ENCODE measurements at regions of chr4 and their contacts with region 1.

Region 1: GRCh38 chr4:38856524-38857337 is at the start of gene TLR6:
- DNase-seq: peak; percentile 79
- ATAC-seq: peak; percentile 38
- H3K4me3 Mint-ChIP-seq: peak within 1 kb of the TSS; percentile 74
- H3K27ac Mint-ChIP-seq: peak within 1 kb of the TSS; percentile 90
- H3K4me1 Mint-ChIP-seq: peaks cover 32% of the 10 kb centered on the region
- H3K27me3 Mint-ChIP-seq: no peaks in the 10 kb centered on the region
- total RNA-seq, gene TLR6: 1.5 to 1.8 TPM

Region 2: GRCh38 chr4:38768968-38769394 is 87.8 kb before region 1 on chr4:
- CTCF ChIA-PET with region 1: interaction called, 12 read pairs
- POLR2A ChIA-PET with region 1: no interaction called
- intact Hi-C with region 1: no loop called
- DNase-seq: no peak
- ATAC-seq: no peak
- H3K4me3 Mint-ChIP-seq: no peak overlapping the region
- H3K27ac Mint-ChIP-seq: no peak overlapping the region
- H3K4me1 Mint-ChIP-seq: no peaks in the 10 kb centered on the region
- H3K27me3 Mint-ChIP-seq: peaks cover 2% of the 10 kb centered on the region

Region 3: GRCh38 chr4:38804654-38805295 is 52.0 kb before region 1 on chr4 and contains the start of gene TLR1:
- CTCF ChIA-PET with region 1: interaction called, 14 read pairs
- POLR2A ChIA-PET with region 1: no interaction called
- intact Hi-C with region 1: loop called (anchors 1 to 2 kb)
- DNase-seq: no peak
- ATAC-seq: peak; percentile 82
- H3K4me3 Mint-ChIP-seq: peak within 1 kb of the TSS; percentile 64
- H3K27ac Mint-ChIP-seq: peak within 1 kb of the TSS; percentile 88
- H3K4me1 Mint-ChIP-seq: peaks cover 24% of the 10 kb centered on the region
- H3K27me3 Mint-ChIP-seq: no peaks in the 10 kb centered on the region
- total RNA-seq, gene TLR1: 1.5 to 1.7 TPM

Region 4: GRCh38 chr4:38872604-38873006 is 15.9 kb after region 1 on chr4:
- CTCF ChIA-PET with region 1: interaction called, 17 read pairs
- POLR2A ChIA-PET with region 1: no interaction called
- intact Hi-C with region 1: no loop called
- DNase-seq: no peak
- ATAC-seq: no peak
- H3K4me3 Mint-ChIP-seq: no peak overlapping the region
- H3K27ac Mint-ChIP-seq: no peak overlapping the region
- H3K4me1 Mint-ChIP-seq: peaks cover 2% of the 10 kb centered on the region
- H3K27me3 Mint-ChIP-seq: peaks cover 16% of the 10 kb centered on the region

Region 5: DNA sequence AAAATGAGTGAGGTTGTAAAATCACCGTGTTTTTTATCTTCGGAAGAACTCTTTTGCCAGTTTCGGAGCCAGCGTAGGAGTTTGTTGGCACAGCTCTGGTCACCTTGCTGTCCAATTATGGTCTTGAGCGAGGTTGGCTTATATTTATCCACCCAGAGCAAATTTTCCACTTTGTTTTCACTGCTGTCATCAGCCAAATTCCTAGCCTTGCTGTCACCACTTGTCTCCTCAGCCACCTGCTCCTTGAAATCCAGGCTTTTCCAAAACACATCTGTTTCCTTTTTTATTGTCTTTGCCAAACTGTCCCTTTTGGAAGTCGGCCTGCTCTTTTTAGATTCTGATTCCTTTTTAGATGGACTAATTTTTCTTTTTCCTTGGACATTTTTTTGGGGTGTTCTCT is 451.9 kb after region 1 on chr4:
- CTCF ChIA-PET with region 1: no interaction called
- POLR2A ChIA-PET with region 1: no interaction called
- intact Hi-C with region 1: no loop called
- DNase-seq: no peak
- ATAC-seq: no peak
- H3K4me3 Mint-ChIP-seq: no peak overlapping the region
- H3K27ac Mint-ChIP-seq: no peak overlapping the region
- H3K4me1 Mint-ChIP-seq: no peaks in the 10 kb centered on the region
- H3K27me3 Mint-ChIP-seq: no peaks in the 10 kb centered on the region

Measured in activated CD4-positive, alpha-beta T cell treated with anti-CD3 and anti-CD28 coated beads for 36 hours (primary cell).